ENCODE measurements at regions of chr12 and their contacts with region 1.

Region 1: DNA sequence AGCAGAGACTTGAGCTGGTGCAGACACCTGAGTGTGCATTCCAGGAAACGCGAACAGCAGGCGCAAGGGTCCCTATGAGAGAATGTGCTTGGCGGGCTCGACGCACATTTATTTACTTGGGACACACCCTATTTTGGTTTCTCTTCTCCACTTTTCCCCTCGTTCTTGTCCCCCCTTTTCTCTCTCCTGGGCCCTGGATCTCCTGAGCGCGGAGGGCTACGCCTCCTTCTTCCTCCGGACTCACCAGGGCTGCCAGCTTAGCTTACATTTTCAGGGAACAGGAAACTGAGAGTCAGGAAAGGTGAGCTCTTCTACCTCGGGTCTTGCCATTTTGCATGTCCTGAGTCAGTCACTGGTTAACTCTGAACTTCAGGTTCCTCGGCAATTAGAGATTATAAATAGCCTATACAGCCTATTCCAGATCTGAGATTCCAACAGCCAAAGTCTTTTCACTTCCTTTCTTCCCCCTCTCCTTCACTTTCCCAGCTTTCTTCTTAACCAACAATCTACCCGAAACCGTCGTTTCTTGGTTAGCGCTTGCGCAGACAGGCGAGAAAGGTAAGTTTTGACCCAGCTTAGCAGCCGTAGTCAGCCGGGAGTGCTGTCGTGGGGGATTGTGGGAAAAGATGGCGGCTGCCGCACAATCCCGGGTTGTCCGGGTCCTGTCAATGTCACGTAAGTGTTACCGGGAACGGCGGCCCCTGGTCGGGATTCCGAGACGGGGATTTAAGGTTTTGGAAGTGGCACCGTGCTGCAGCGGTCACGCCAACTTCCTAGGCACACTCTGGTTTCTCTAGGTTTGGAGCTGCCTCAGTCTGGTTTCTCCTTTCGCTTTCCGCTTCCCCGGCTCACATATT is at the starts of genes AKAP3 and NDUFA9:
- DNase-seq: peak; percentile 90 to 92
- H3K4me3 ChIP-seq: peak within 1 kb of the TSS; percentile 46
- H3K4me3 Mint-ChIP-seq: peak within 1 kb of the TSS; percentile 98
- H3K27ac Mint-ChIP-seq: peak within 1 kb of the TSS; percentile 95
- H3K4me1 ChIP-seq: peaks cover 7% of the 10 kb centered on the region
- H3K4me1 Mint-ChIP-seq: peaks cover 13% of the 10 kb centered on the region
- H3K27me3 ChIP-seq: no peaks in the 10 kb centered on the region
- H3K27me3 Mint-ChIP-seq: peaks cover 5% of the 10 kb centered on the region
- CTCF ChIP-seq: no peak
- total RNA-seq, gene AKAP3: 1.6 and 3.2 TPM in 2 replicates
- total RNA-seq, gene NDUFA9: 263 and 300 TPM in 2 replicates

Region 2: GRCh38 chr12:4579305-4580102 is 69.2 kb before region 1 on chr12:
- CTCF ChIA-PET with region 1: no interaction called
- POLR2A ChIA-PET with region 1: no interaction called
- intact Hi-C with region 1: loop called (anchors 2 kb)
- DNase-seq: peak; percentile 54 to 55
- H3K4me3 ChIP-seq: no peak overlapping the region
- H3K4me3 Mint-ChIP-seq: no peak overlapping the region
- H3K27ac Mint-ChIP-seq: no peak overlapping the region
- H3K4me1 ChIP-seq: no peaks in the 10 kb centered on the region
- H3K4me1 Mint-ChIP-seq: no peaks in the 10 kb centered on the region
- H3K27me3 ChIP-seq: no peaks in the 10 kb centered on the region; the same call in 1 of the 2 replicates
- H3K27me3 Mint-ChIP-seq: peaks cover 40% of the 10 kb centered on the region
- CTCF ChIP-seq: peak; percentile 59 to 62

Region 3: GRCh38 chr12:4604684-4605193 is 44.0 kb before region 1 on chr12:
- CTCF ChIA-PET with region 1: interaction called, 4 read pairs
- POLR2A ChIA-PET with region 1: interaction called, 6 read pairs
- intact Hi-C with region 1: loop called (anchors 2 kb)
- DNase-seq: peak; percentile 69 to 72
- H3K4me3 ChIP-seq: peak overlapping the region; percentile 43
- H3K4me3 Mint-ChIP-seq: peak overlapping the region; percentile 78
- H3K27ac Mint-ChIP-seq: no peak overlapping the region
- H3K4me1 ChIP-seq: peaks cover 13% of the 10 kb centered on the region
- H3K4me1 Mint-ChIP-seq: peaks cover 22% of the 10 kb centered on the region
- H3K27me3 ChIP-seq: no peaks in the 10 kb centered on the region
- H3K27me3 Mint-ChIP-seq: peaks cover 24% of the 10 kb centered on the region
- CTCF ChIP-seq: peak; percentile 94 to 96

Region 4: GRCh38 chr12:4663971-4664505 is 15.3 kb after region 1 on chr12:
- CTCF ChIA-PET with region 1: no interaction called
- POLR2A ChIA-PET with region 1: no interaction called
- intact Hi-C with region 1: no loop called
- DNase-seq: no peak
- H3K4me3 ChIP-seq: no peak overlapping the region
- H3K4me3 Mint-ChIP-seq: no peak overlapping the region
- H3K27ac Mint-ChIP-seq: no peak overlapping the region
- H3K4me1 ChIP-seq: no peaks in the 10 kb centered on the region
- H3K4me1 Mint-ChIP-seq: no peaks in the 10 kb centered on the region
- H3K27me3 ChIP-seq: no peaks in the 10 kb centered on the region
- H3K27me3 Mint-ChIP-seq: no peaks in the 10 kb centered on the region
- CTCF ChIP-seq: no peak

Region 5: DNA sequence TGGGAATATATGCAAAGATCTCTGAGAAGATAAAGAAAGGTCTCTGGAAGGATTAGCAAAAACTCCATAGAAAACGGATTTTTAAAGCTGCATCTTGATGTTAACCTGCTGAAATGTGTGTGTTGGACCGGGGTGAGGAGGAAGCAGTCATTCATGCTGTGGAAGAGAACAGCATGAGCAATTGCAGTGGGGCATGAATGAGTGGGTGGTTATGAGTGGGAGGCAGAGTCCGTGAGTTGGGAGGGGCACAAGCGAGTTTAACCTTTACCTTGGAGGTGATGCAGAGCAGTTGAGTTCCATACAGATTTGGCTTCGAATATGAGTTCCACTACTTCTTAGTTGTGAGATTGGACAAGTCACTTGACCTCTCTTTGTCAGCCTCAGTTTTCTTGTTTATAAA is 42.0 kb after region 1 on chr12:
- CTCF ChIA-PET with region 1: no interaction called
- POLR2A ChIA-PET with region 1: no interaction called
- intact Hi-C with region 1: no loop called
- DNase-seq: no peak
- H3K4me3 ChIP-seq: no peak overlapping the region
- H3K4me3 Mint-ChIP-seq: no peak overlapping the region
- H3K27ac Mint-ChIP-seq: no peak overlapping the region
- H3K4me1 ChIP-seq: no peaks in the 10 kb centered on the region
- H3K4me1 Mint-ChIP-seq: no peaks in the 10 kb centered on the region
- H3K27me3 ChIP-seq: no peaks in the 10 kb centered on the region
- H3K27me3 Mint-ChIP-seq: no peaks in the 10 kb centered on the region
- CTCF ChIP-seq: no peak